ENCODE measurements at regions of chrX and their contacts with region 1.

Region 1: GRCh38 chrX:15594371-15594770 is 6.4 kb downstream of the ACE2 start:
- DNase-seq: no peak
- ATAC-seq: peak; percentile 64

Region 2: DNA sequence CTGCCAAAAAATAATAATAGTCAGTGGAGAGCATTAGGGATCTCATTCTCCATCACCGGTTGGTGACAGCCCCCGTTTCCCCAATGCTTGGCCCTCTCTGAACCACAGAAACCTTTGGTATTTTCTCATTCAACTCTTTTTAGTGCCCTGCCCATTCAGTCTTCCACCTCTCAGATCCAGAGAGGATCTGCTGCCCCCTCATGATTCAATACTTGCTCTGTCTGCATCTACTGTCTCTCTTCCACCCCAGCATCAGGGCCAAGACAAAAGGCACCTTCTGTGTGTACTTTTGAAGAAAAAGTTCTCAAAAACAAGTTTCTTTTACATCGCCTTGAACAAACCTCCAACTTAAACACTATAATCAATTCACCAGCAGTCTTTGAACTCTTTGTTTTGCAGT is 50.9 kb after region 1 on chrX:
- intact Hi-C with region 1: loop called (anchors 10 kb)
- DNase-seq: no peak
- ATAC-seq: peak; percentile 43

Measured in Right ventricle myocardium superior (tissue), 1 donor.